Gastrocnemius medialis (tissue), 4 donors: ENCODE measurements at regions of chr11 and their contacts with region 1.

Region 1: GRCh38 chr11:512761-513595 is 5.9 kb upstream of the RNH1 start:
- DNase-seq: no peak
- ATAC-seq: no peak
- H3K4me3 ChIP-seq: no peak overlapping the region
- H3K27ac ChIP-seq: no peak overlapping the region
- H3K4me1 ChIP-seq: peaks cover 0 to under 1% of the 10 kb centered on the region in 2 donors
- H3K27me3 ChIP-seq: no peaks in the 10 kb centered on the region
- CTCF ChIP-seq: no peak
- POLR2A ChIP-seq: no peak

Region 2: GRCh38 chr11:2400069-2400760 is 1887.2 kb after region 1 on chr11 and contains the start of gene TSSC4:
- in situ Hi-C with region 1: no loop called
- intact Hi-C with region 1: loop called (anchors 5 kb)
- DNase-seq: peak; percentile 100
- ATAC-seq: peak; percentile 96 to 97
- H3K4me3 ChIP-seq: peak within 1 kb of the TSS; percentile 84 to 100 (median 97)
- H3K27ac ChIP-seq: peak within 1 kb of the TSS; percentile 97 to 100 (median 98)
- H3K4me1 ChIP-seq: peaks cover 22 to 26% of the 10 kb centered on the region in 2 donors
- H3K27me3 ChIP-seq: no peaks in the 10 kb centered on the region
- CTCF ChIP-seq: peak; percentile 95 to 99 (median 98)
- POLR2A ChIP-seq: peak; percentile 91 to 97
- total RNA-seq, gene TSSC4: 53.4 to 92.5 (median 76.8) TPM